ENCODE measurements at regions of chr18 and their contacts with region 1.

Region 1: DNA sequence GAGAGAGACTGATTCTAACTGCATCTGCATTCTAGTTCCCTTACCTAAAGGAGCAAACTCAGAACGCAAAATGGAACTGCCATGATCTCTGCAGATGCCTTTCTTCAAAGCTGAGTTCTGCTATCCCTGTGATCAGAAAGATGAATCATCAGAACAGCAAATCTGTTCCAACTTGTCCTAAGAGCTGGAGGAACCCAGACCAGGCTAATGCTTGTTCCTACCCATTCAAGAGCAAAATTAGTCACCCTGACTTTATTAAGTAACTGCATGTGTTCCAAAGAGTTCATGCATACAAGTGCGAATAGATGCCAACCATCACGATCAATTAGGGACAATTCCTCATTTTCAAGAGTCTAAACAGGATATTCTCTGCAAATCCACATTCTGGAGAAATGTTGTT is 46.5 kb downstream of the MBP start:
- DNase-seq: peak; percentile 24
- ATAC-seq: no peak
- H3K4me3 ChIP-seq: no peak overlapping the region
- H3K27ac ChIP-seq: no peak overlapping the region
- H3K4me1 ChIP-seq: peaks cover 38% of the 10 kb centered on the region
- H3K27me3 ChIP-seq: no peaks in the 10 kb centered on the region
- CTCF ChIP-seq: no peak

Region 2: DNA sequence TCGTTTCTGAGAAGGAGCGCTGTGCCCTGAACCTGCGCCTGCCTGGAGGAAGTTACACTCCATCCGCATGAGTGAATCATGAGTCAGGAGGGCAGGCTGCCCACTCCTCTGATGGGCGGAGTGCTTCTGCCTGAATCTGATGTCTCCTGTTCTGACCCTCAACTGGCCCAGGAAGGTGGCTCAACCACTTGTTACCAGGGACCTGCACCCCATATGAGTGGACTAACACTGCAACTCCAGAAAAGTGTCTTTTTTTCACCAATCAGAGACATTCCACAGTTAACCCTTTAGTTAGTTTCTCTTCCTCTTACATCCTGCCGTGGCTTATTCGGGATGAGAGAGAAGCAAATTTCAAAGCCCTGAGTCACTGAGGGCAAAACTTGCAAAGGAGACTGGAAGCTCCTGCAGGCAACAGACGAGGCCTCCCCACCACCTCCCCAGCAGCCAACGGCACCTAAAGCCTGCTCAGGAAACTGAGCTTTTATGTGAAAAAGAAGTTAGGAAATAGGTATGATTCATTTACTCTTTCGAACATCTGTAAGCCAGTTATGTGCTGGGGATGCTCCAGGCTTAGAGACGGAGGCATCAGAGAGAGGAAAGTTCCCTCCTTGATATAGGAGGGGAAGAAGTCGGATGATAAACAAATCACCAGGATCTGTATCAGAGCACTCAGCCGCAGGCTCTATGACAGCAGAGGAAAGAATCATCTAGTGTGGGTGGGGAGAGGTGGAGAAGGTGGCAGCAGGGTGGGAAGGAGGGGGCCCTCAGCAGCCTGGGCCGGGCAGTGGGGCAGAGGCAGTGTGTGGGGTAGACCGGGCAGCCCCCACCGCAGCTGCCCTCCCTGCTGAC is 15.6 kb after region 1 on chr18:
- CTCF ChIA-PET with region 1: no interaction called
- POLR2A ChIA-PET with region 1: no interaction called
- intact Hi-C with region 1: loop called (anchors 1 kb)
- DNase-seq: peak; percentile 95
- ATAC-seq: peak; percentile 83
- H3K4me3 ChIP-seq: peak overlapping the region; percentile 46; the same call in 1 of the 2 replicates
- H3K27ac ChIP-seq: peak overlapping the region; percentile 99
- H3K4me1 ChIP-seq: peaks cover 46% of the 10 kb centered on the region
- H3K27me3 ChIP-seq: no peaks in the 10 kb centered on the region
- CTCF ChIP-seq: no peak

Region 3: DNA sequence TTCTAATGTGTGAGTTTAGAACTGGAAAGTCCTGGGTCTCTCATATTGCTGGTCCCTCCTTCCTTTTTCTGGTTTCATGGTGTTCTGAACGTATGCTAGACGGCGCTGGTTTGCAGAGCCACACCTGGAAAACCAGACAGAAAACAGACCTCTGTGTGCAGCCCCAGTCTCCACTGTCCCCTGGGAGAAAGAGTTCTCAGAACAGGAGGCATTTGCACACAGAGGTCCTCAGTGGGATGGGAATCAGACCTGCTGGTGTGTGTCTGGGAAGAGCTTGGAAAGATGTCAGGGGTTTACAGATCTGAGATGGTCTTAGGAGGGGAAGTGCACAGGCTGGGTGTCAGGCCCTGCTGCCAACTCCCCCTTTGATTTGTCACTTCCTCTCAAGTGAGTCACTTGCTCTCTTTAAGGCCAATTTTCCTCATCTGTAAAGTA is 61.4 kb after region 1 on chr18:
- CTCF ChIA-PET with region 1: no interaction called
- POLR2A ChIA-PET with region 1: interaction called, 33 read pairs
- intact Hi-C with region 1: no loop called
- DNase-seq: peak; percentile 35
- ATAC-seq: peak; percentile 51; the same call in 1 of the 2 replicates
- H3K4me3 ChIP-seq: no peak overlapping the region
- H3K27ac ChIP-seq: no peak overlapping the region
- H3K4me1 ChIP-seq: peaks cover 9% of the 10 kb centered on the region
- H3K27me3 ChIP-seq: no peaks in the 10 kb centered on the region
- CTCF ChIP-seq: no peak

Region 4: DNA sequence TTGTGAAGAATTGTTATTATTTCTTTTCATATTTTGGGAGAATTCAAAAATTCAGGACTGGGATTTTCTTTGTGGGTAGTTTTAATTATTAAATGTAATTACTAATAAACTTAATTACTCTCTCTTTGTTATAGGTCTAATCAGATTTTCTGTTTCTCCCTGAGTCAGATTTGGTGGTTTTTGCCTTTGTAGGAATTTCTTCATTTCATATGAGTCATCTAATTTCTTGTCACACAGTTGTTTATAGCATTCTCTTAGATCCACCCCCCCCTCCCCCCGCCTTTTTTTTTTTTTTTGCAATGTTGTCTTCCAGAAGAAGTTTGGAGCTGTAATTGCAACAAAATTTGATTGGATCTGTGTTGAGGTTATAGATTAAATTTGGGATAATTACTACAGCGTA is 137.6 kb after region 1 on chr18:
- CTCF ChIA-PET with region 1: no interaction called
- POLR2A ChIA-PET with region 1: no interaction called
- intact Hi-C with region 1: no loop called
- DNase-seq: peak; percentile 63
- ATAC-seq: peak; percentile 63
- H3K4me3 ChIP-seq: no peak overlapping the region
- H3K27ac ChIP-seq: peak overlapping the region; percentile 35
- H3K4me1 ChIP-seq: peaks cover 16% of the 10 kb centered on the region
- H3K27me3 ChIP-seq: peaks cover 18% of the 10 kb centered on the region; the same call in 1 of the 2 replicates
- CTCF ChIP-seq: no peak